ENCODE measurements at regions of chrX and their contacts with region 1.

Region 1: DNA sequence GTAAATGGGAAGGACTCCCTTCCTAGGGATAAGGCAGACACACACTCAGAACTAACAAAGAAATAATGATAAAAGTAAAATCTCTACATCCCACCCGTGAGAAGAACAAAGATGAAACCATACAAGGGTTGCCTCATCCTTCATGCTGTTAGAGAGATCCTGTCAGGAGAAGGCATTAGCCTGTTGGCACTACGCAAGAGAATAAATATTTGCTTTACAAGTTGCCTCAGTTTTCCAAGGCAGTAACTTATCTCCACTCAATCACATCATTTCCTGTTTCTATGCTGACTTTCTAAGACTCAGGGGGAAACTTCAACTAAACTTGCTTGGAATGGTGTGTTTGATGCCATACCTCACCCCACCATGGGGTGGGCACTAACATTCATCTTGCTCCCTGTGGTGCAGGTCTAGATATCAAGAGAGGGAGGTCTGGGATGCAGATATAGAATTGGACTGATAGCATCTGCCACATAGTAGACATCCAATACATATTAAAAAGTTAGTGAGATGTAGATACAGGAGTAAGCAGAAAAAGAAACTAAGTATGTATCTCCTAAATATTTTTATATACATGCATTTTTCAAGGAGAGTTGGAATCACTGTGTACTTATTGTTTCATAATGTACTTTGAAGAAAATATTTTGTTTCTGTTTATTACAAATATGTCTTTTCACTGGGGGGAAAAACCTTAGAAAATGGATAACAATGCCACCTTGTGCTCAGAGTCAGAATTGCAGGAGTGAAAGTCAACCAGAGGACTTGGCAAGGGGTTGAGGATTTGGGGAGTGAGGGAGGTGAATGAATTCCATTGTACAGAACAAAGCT is 57.2 kb upstream of the BEX4 start:
- ATAC-seq: peak in 2 of 8 experiments; percentile 33 to 76
- H3K4me3 ChIP-seq: no peak overlapping the region
- H3K27ac ChIP-seq: no peak overlapping the region
- H3K4me1 ChIP-seq: no peaks in the 10 kb centered on the region

Region 2: GRCh38 chrX:102950908-102951866 is 206.5 kb before region 1 on chrX:
- in situ Hi-C with region 1: loop called in 2 of 9 experiments (anchors 25 kb)
- ATAC-seq: peak; percentile 45 to 91 (median 80)
- H3K4me3 ChIP-seq: peak overlapping the region in 3 of 5 donors; percentile 11 to 22 (median 12)
- H3K27ac ChIP-seq: no peak overlapping the region
- H3K4me1 ChIP-seq: no peaks in the 10 kb centered on the region

Region 3: DNA sequence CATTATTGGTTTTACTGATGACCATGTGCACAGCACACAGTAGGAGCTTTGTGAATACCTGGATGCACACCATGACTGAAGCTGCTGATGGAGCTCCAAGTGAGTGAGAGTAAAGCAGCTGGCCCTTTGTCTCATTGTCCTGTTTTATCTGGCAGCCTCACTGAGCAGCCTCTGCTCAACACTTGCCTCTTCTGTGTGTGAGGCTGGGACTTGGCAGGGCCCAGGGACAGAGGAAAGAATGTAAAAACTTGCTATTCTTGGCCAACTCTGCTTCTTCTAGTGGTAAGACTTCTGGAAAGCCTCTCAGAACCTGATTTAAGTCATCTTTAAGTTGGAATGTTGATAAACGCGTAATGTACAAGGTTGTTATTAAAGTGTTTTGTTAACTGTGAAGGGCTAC is 155.1 kb before region 1 on chrX:
- in situ Hi-C with region 1: no loop called
- ATAC-seq: no peak
- H3K4me3 ChIP-seq: no peak overlapping the region
- H3K27ac ChIP-seq: no peak overlapping the region
- H3K4me1 ChIP-seq: no peaks in the 10 kb centered on the region

Region 4: DNA sequence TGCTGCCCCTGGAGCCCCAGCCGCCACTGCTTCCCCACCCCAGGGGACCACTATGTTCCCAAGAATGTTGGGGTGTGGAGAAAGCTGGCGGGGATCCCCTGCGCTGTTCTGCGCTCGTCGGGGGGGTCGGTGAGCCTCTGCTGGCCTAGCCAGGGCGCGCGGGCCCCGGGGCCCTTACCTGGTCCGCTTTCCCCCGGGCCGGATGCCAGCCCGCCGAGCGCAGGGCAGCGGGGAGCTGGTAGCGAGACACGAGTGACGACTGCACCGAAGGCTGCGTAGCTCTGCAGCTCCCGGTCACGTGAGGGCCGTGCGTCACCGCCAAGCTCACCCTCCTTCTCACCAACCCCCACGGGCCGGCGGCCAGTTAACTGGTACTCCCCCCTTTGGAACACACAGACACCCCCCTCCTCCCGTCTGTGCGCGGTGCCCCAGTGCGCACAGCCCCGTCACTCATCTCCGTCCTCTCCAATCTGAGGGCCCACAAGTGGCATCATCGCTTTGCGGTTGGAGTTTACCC is 93.7 kb before region 1 on chrX and contains the start of gene BEX1:
- in situ Hi-C with region 1: loop called in 1 of 9 experiments (anchors 25 kb)
- ATAC-seq: peak in 7 of 8 experiments; percentile 26 to 96 (median 95)
- H3K4me3 ChIP-seq: peak within 1 kb of the TSS; percentile 61 to 92 (median 78)
- H3K27ac ChIP-seq: peak within 1 kb of the TSS; percentile 92 to 93
- H3K4me1 ChIP-seq: peaks cover 0 to 5% of the 10 kb centered on the region in 2 donors
- total RNA-seq, gene BEX1: 8.8 to 352 (median 299) TPM in 6 of 8 experiments, not detected in the others

Region 5: GRCh38 chrX:103423955-103424638 is 266.4 kb after region 1 on chrX:
- in situ Hi-C with region 1: no loop called
- ATAC-seq: peak in 5 of 8 experiments; percentile 27 to 64 (median 45)
- H3K4me3 ChIP-seq: no peak overlapping the region
- H3K27ac ChIP-seq: no peak overlapping the region
- H3K4me1 ChIP-seq: peaks cover 3 to 5% of the 10 kb centered on the region in 2 donors

Measured in motor neuron (in vitro differentiated cells).